H1 (cell line): ENCODE measurements at regions of chr1 and their contacts with region 1.

Region 1: GRCh38 chr1:151281969-151282882 is at the start of gene ZNF687:
- DNase-seq: peak; percentile 98 to 100
- H3K4me3 ChIP-seq: peak within 1 kb of the TSS; percentile 77 to 96 (median 86)
- H3K27ac ChIP-seq: peak within 1 kb of the TSS; percentile 99
- H3K4me1 ChIP-seq: peaks cover 5 to 9% (median 7%) of the 10 kb centered on the region in 4 experiments; a peak in 5 of 7 replicates
- H3K27me3 ChIP-seq: no peaks in the 10 kb centered on the region
- CTCF ChIP-seq: no peak
- EP300 ChIP-seq: no peak
- POLR2A ChIP-seq: no peak; a peak in 1 of 3 replicates
- RAD21 ChIP-seq: no peak
- total RNA-seq, gene ZNF687: 43.0 and 45.9 TPM in 2 replicates

Region 2: GRCh38 chr1:151189638-151190445 is 92.4 kb before region 1 on chr1 and contains the start of gene VPS72:
- CTCF ChIA-PET with region 1: no interaction called
- POLR2A ChIA-PET with region 1: interaction called, 10 read pairs
- DNase-seq: peak; percentile 60 to 86
- H3K4me3 ChIP-seq: peak within 1 kb of the TSS; percentile 70 to 98 (median 95)
- H3K27ac ChIP-seq: peak within 1 kb of the TSS; percentile 71
- H3K4me1 ChIP-seq: no peaks in the 10 kb centered on the region
- H3K27me3 ChIP-seq: no peaks in the 10 kb centered on the region
- CTCF ChIP-seq: no peak
- EP300 ChIP-seq: peak in 1 of 2 experiments; percentile 72; a peak in 2 of 3 replicates
- POLR2A ChIP-seq: peak; percentile 75 to 89
- RAD21 ChIP-seq: no peak
- total RNA-seq, gene VPS72: 114 and 121 TPM in 2 replicates

Region 3: GRCh38 chr1:151199873-151200584 is 82.2 kb before region 1 on chr1:
- CTCF ChIA-PET with region 1: no interaction called
- POLR2A ChIA-PET with region 1: no interaction called
- DNase-seq: no peak
- H3K4me3 ChIP-seq: peak overlapping the region; percentile 74 to 99 (median 93)
- H3K27ac ChIP-seq: no peak overlapping the region
- H3K4me1 ChIP-seq: peaks cover 2 to 4% (median 3%) of the 10 kb centered on the region in 4 experiments; a peak in 3 of 7 replicates
- H3K27me3 ChIP-seq: no peaks in the 10 kb centered on the region
- CTCF ChIP-seq: no peak
- EP300 ChIP-seq: no peak
- POLR2A ChIP-seq: no peak
- RAD21 ChIP-seq: no peak

Region 4: DNA sequence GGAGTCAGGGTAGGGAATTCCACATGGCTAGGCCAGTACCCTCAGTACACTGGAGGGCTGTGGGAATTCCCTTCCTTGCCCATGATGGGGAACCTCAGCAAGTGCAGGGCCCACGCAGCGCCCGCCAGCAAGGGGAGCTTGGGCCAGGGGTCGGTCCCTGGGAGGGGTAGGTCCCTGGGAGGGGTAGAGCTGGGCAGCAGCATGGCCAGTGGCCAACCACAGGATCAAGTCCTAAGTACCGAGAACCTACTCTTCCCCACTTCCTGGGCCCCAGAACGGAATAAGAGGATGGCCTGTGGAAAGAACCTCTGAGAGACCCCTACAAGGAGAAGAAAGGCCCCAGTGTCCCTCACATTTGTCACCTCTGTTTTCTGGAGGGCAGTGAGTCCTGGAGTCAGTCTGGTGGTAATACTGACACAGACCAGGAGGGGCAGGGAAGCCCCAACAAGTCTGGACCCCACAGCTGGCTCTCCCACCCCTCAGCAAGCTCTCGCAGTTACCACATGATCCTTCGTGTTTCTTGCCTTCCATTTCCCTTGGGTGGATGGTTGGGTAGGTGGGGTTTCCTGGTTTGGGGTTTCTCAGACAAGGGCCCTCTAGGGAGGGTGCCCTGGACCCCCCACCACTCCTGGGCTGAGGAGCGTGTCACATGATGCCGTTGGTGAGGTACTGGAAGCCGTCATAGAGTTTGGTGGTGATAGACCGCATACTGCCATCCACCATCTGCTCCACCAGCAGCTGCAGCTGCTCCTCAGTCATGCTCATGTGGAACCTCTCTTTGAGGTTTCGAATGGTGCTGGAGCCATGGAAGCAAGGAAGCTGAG is 10.2 kb after region 1 on chr1:
- CTCF ChIA-PET with region 1: interaction called, 6 read pairs
- POLR2A ChIA-PET with region 1: interaction called, 213 read pairs
- DNase-seq: no peak
- H3K4me3 ChIP-seq: no peak overlapping the region
- H3K27ac ChIP-seq: no peak overlapping the region
- H3K4me1 ChIP-seq: peaks cover 6 to 21% (median 15%) of the 10 kb centered on the region in 4 experiments
- H3K27me3 ChIP-seq: no peaks in the 10 kb centered on the region
- CTCF ChIP-seq: peak; percentile 23 to 38 (median 28); a peak in 3 of 4 replicates
- EP300 ChIP-seq: no peak
- POLR2A ChIP-seq: peak; percentile 51 to 53
- RAD21 ChIP-seq: peak; percentile 6 to 27; a peak in 2 of 4 replicates

Region 5: DNA sequence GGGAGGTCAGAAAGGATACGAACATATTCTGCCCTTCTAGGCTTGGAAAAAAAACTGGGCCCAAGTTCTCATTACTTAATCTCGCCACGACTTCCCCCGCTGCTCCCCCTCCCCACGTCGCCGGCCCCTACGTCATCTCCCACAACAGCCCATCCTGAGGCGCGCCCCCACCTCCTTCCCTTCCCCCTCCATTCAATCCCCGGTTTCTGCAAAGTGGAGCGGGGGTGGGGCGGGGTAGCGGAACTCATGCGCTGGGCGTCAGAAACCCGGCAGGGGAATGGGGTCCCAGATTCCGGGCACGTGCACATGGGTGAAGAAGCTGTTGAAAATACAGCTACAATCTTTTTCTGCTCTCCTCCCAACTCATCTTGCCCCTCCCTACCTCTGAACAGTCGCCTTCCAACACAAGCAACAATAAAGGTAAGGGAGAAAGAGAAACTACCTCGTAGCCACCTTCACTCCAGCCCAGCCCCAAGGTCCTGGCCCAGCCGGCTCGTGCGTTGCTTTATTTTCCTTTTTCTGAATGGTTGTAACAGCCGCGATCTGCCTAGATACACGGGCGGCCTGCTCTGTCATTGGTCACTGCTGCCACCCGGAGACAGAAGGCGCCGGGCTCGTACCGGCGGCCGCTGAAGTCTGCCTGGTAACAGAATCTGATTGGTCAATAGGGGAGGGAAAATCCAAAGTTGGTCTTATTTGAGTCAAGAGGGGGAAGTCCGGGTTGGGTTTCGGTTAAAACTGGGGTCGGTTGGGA is 64.7 kb after region 1 on chr1 and contains the start of gene RFX5:
- CTCF ChIA-PET with region 1: no interaction called
- POLR2A ChIA-PET with region 1: interaction called, 14 read pairs
- DNase-seq: peak; percentile 89 to 98
- H3K4me3 ChIP-seq: peak within 1 kb of the TSS; percentile 61 to 76 (median 66)
- H3K27ac ChIP-seq: peak within 1 kb of the TSS; percentile 99
- H3K4me1 ChIP-seq: peaks cover 4 to 14% (median 12%) of the 10 kb centered on the region in 4 experiments; a peak in 5 of 7 replicates
- H3K27me3 ChIP-seq: no peaks in the 10 kb centered on the region
- CTCF ChIP-seq: no peak
- EP300 ChIP-seq: peak; percentile 74 to 97
- POLR2A ChIP-seq: peak; percentile 70 to 82
- RAD21 ChIP-seq: peak in 1 of 2 experiments; percentile 0; a peak in 1 of 4 replicates
- total RNA-seq, gene RFX5: 57.6 and 59.7 TPM in 2 replicates

Region 6: DNA sequence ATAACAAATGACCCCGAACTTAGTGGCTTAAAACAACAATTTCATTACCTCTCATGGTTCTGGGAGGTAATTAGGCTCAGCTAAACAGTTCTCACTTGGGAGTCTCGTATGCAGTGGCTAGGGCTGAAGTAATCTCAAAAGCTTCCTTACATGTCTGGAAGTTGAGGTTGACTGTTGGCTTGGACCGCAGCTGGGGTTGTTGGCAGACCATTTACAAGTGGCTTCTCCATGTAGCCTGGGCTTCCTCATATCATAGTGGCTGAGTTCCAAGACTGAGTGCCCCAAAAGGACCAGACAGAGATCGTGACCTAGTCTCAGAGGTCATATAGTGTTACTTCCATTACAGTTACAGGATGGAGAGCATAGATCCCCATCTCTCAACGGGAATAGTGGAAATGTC is 179.5 kb after region 1 on chr1:
- CTCF ChIA-PET with region 1: no interaction called
- POLR2A ChIA-PET with region 1: no interaction called
- DNase-seq: no peak
- H3K4me3 ChIP-seq: no peak overlapping the region
- H3K27ac ChIP-seq: no peak overlapping the region
- H3K4me1 ChIP-seq: peaks cover 0 to 11% (median 2%) of the 10 kb centered on the region in 4 experiments; a peak in 3 of 7 replicates
- H3K27me3 ChIP-seq: no peaks in the 10 kb centered on the region; a peak in 2 of 7 replicates
- CTCF ChIP-seq: no peak
- EP300 ChIP-seq: no peak
- POLR2A ChIP-seq: no peak
- RAD21 ChIP-seq: no peak